ENCODE measurements at regions of chr12 and their contacts with region 1.

Region 1: GRCh38 chr12:73867147-73867546 is 670.5 kb upstream of the ATXN7L3B start:
- DNase-seq: no peak
- H3K4me3 ChIP-seq: no peak overlapping the region
- H3K27ac ChIP-seq: no peak overlapping the region
- H3K4me1 ChIP-seq: no peaks in the 10 kb centered on the region
- H3K27me3 ChIP-seq: no peaks in the 10 kb centered on the region
- CTCF ChIP-seq: no peak
- POLR2A ChIP-seq: no peak

Region 2: GRCh38 chr12:72694193-72694592 is 1173.0 kb before region 1 on chr12:
- intact Hi-C with region 1: loop called (anchors 5 kb)
- DNase-seq: no peak
- H3K4me3 ChIP-seq: no peak overlapping the region
- H3K27ac ChIP-seq: no peak overlapping the region
- H3K4me1 ChIP-seq: no peaks in the 10 kb centered on the region
- H3K27me3 ChIP-seq: no peaks in the 10 kb centered on the region
- CTCF ChIP-seq: no peak
- POLR2A ChIP-seq: no peak

Region 3: GRCh38 chr12:73136386-73136785 is 730.8 kb before region 1 on chr12:
- intact Hi-C with region 1: no loop called
- DNase-seq: no peak
- H3K4me3 ChIP-seq: no peak overlapping the region
- H3K27ac ChIP-seq: no peak overlapping the region
- H3K4me1 ChIP-seq: no peaks in the 10 kb centered on the region
- H3K27me3 ChIP-seq: no peaks in the 10 kb centered on the region
- CTCF ChIP-seq: no peak
- POLR2A ChIP-seq: no peak

Region 4: DNA sequence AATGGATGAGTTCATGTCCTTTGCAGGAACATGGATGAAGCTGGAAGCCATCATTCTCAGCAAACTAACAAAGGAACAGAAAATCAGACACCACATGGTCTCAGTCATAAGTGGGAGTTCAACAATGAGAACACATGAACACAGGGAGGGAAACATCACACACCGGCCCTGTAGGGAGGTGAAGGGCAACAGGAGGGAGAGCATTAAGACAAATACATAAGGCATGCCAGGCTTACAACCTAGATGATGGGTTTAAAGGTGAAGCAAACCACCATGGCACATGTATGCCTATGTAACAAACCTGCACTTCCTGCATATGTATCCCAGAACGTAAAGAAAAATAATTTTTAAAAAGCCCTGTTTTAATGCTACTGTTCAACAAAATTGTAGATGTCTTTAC is 243.7 kb before region 1 on chr12:
- intact Hi-C with region 1: no loop called
- DNase-seq: no peak
- H3K4me3 ChIP-seq: no peak overlapping the region
- H3K27ac ChIP-seq: no peak overlapping the region
- H3K4me1 ChIP-seq: no peaks in the 10 kb centered on the region
- H3K27me3 ChIP-seq: no peaks in the 10 kb centered on the region
- CTCF ChIP-seq: no peak
- POLR2A ChIP-seq: no peak

Measured in breast epithelium (tissue), 4 donors.